BJ (cell line): ENCODE measurements at regions of chr2 and their contacts with region 1.

Region 1: DNA sequence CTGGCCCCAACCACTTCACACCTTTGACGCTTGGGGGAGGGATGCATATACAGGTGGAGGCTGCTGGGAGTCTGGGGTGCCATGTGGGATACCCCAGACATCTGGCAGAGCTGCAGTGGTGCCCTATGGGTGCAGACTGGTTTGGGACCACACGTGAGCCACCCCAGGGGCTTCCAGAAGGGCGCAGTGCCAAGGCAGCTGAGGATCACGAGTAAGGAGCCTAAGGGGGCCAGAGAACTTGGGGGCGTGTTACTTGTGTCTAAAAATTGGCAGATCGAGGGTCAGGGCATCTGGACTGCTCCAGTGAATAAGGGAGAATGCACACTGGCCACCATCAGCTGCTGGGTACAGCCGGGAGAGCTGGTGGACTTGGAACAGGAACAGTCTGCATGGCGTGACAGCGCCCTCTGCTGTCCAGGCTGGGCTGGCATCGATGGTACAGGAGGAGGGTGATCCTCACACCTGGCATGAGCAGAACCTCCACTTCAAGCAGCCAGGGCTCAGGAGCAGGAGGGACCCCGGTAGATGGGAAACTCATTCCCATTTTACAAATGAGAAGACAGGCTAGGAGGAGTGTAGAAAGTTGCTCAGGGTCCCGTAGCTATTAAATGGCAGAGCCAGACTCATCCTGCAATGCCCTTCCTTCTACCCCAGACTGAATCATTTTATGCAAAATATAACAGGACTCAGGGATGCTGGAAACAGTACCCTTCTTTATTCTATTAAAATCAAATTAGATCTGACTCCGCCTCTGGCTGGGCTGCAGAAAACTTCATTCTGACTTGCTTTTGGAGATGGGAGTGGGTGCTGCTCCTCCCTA is 60.4 kb downstream of the ATOH8 start:
- DNase-seq: no peak
- H3K4me3 ChIP-seq: no peak overlapping the region
- H3K27me3 ChIP-seq: no peaks in the 10 kb centered on the region
- CTCF ChIP-seq: peak; percentile 96

Region 2: DNA sequence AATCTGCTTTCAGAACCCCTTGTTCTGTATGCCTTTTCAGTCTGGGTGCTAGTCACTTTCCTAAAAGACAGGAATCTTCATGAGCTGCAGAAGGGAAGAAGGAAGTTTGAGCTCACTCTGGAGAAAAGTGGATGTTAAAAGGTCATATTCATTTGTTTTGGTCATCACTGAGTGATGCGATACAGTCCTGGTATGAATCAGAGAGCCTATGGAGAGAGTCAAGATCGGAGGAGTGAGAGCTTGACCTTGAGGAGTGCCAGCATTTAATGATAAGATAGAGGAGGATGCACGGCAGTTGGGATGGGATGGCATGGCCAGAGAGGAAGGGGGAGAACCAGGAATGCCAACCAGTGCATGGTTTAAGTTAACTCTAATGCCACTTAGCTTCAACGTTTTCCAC is 178.6 kb before region 1 on chr2:
- CTCF ChIA-PET with region 1: interaction called, 76 read pairs
- POLR2A ChIA-PET with region 1: no interaction called
- DNase-seq: no peak
- H3K4me3 ChIP-seq: no peak overlapping the region
- H3K27me3 ChIP-seq: no peaks in the 10 kb centered on the region
- CTCF ChIP-seq: no peak

Region 3: GRCh38 chr2:85741833-85742455 is 72.2 kb before region 1 on chr2:
- CTCF ChIA-PET with region 1: interaction called, 245 read pairs
- POLR2A ChIA-PET with region 1: no interaction called
- DNase-seq: no peak
- H3K4me3 ChIP-seq: no peak overlapping the region; the same call in 1 of the 2 replicates
- H3K27me3 ChIP-seq: no peaks in the 10 kb centered on the region
- CTCF ChIP-seq: peak; percentile 13; the same call in 1 of the 2 replicates

Region 4: GRCh38 chr2:85772019-85772745 is 42.0 kb before region 1 on chr2:
- CTCF ChIA-PET with region 1: interaction called, 11 read pairs
- POLR2A ChIA-PET with region 1: no interaction called
- DNase-seq: peak; percentile 99
- H3K4me3 ChIP-seq: no peak overlapping the region; the same call in 1 of the 2 replicates
- H3K27me3 ChIP-seq: no peaks in the 10 kb centered on the region
- CTCF ChIP-seq: peak; percentile 32; the same call in 1 of the 2 replicates

Region 5: DNA sequence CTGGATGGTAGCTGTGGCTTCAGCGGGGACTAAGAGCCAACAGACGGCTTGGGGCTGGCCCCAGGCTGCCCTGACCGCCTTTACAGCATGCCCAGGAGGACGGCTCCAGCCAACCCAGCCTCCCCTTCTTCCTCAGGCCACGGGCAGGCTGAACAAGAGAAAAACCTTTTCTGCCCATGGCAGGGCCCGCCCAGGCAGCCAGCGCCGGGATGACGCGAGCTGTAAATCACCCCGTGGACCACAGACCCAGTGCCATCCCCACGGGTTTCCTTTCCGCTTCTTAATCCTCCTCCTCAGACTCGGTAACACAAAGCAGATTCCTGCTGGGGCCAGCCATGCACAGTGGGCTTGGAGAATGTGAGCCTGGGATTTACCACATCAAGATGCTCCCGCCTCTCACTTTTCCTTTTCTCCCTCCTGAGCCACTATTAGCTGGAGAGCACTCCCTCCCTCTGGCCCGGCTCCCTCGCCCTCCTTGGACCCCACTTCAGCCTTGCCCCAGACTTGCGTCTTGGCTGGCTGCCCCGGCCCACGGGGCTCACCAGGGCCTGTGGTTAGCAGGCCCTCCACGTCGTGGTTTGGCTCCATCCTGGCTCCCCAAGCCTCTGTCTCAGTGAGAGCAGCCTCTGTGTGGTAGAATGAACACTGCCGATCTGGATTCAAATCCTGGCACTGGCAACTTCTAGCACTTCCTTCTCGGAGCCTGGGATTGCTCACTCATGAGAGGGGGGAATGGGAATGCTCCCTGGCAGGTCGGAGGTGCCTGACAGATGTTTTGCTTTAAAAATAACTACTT is 29.0 kb before region 1 on chr2:
- CTCF ChIA-PET with region 1: no interaction called
- POLR2A ChIA-PET with region 1: no interaction called
- DNase-seq: peak; percentile 30
- H3K4me3 ChIP-seq: no peak overlapping the region
- H3K27me3 ChIP-seq: no peaks in the 10 kb centered on the region
- CTCF ChIP-seq: no peak

Region 6: GRCh38 chr2:85826990-85827878 is 13.0 kb after region 1 on chr2:
- CTCF ChIA-PET with region 1: interaction called, 39 read pairs
- POLR2A ChIA-PET with region 1: no interaction called
- DNase-seq: no peak
- H3K4me3 ChIP-seq: no peak overlapping the region
- H3K27me3 ChIP-seq: no peaks in the 10 kb centered on the region; the same call in 1 of the 2 replicates
- CTCF ChIP-seq: peak; percentile 93

Region 7: GRCh38 chr2:86464652-86465051 is 650.5 kb after region 1 on chr2:
- CTCF ChIA-PET with region 1: no interaction called
- POLR2A ChIA-PET with region 1: no interaction called
- DNase-seq: no peak
- H3K4me3 ChIP-seq: no peak overlapping the region
- H3K27me3 ChIP-seq: no peaks in the 10 kb centered on the region
- CTCF ChIP-seq: no peak